Calu3 (cell line): ENCODE measurements at regions of chr19 and their contacts with region 1.

Region 1: DNA sequence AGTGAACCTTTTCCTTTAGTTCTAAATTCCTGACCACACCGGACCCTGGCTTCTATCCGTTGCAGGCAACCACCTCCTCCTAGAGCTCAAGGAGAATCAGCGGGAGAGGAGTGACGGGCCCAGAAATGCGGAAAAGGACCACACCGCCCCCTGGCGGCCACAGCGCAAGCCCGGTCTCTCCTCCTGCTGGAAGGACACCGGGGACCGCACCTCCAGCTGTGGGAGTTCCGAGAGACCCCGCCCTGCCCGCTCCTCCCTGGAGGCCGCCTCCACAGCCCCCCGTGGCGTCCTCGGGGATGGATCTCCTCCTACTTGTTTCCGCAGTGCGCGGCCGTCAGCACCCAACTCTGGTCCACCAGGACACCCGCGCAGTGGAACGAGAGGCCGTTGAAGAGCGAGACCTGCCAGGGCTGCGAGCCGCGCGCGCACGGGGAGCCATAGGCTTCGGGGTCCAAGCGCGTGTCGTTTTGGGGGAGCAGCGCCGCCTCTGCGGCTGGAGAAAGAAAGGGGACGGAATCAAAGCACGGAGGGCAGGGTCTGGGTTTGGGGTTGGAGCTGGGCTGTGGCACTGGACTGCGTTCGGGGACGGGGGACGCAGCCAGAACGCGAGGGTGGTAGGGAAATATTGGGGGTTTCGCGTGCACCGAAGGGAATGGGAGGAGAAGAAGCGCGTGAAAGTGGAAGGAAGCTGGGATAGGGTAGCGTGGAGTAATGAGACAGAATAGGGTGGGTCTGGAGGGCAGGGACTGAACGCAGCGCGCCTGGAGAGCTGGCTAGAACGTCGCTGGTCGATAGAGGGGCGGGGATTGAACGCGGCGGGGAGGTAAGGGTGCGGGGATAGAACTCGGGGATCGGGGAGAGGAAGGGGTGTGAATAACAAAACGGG is 2.5 kb downstream of the KLK10 start:
- DNase-seq: peak; percentile 98
- H3K4me3 Mint-ChIP-seq: peak overlapping the region; percentile 89
- H3K27ac Mint-ChIP-seq: peak overlapping the region; percentile 86
- H3K4me1 Mint-ChIP-seq: peaks cover 30% of the 10 kb centered on the region
- H3K27me3 Mint-ChIP-seq: no peaks in the 10 kb centered on the region
- CTCF ChIP-seq: peak; percentile 98

Region 2: GRCh38 chr19:49210108-49210900 is 1806.7 kb before region 1 on chr19:
- CTCF ChIA-PET with region 1: no interaction called
- intact Hi-C with region 1: no loop called
- DNase-seq: peak; percentile 34
- H3K4me3 Mint-ChIP-seq: no peak overlapping the region
- H3K27ac Mint-ChIP-seq: no peak overlapping the region
- H3K4me1 Mint-ChIP-seq: peaks cover 12% of the 10 kb centered on the region
- H3K27me3 Mint-ChIP-seq: no peaks in the 10 kb centered on the region
- CTCF ChIP-seq: no peak

Region 3: GRCh38 chr19:50804420-50805272 is 212.4 kb before region 1 on chr19:
- CTCF ChIA-PET with region 1: no interaction called
- intact Hi-C with region 1: loop called (anchors 10 kb)
- DNase-seq: peak; percentile 99
- H3K4me3 Mint-ChIP-seq: peak overlapping the region; percentile 85
- H3K27ac Mint-ChIP-seq: peak overlapping the region; percentile 98
- H3K4me1 Mint-ChIP-seq: peaks cover 37% of the 10 kb centered on the region
- H3K27me3 Mint-ChIP-seq: peaks cover 24% of the 10 kb centered on the region
- CTCF ChIP-seq: no peak

Region 4: GRCh38 chr19:50851620-50852019 is 165.4 kb before region 1 on chr19:
- CTCF ChIA-PET with region 1: no interaction called
- intact Hi-C with region 1: no loop called
- DNase-seq: no peak
- H3K4me3 Mint-ChIP-seq: no peak overlapping the region
- H3K27ac Mint-ChIP-seq: no peak overlapping the region
- H3K4me1 Mint-ChIP-seq: no peaks in the 10 kb centered on the region
- H3K27me3 Mint-ChIP-seq: peaks cover 52% of the 10 kb centered on the region
- CTCF ChIP-seq: no peak

Region 5: DNA sequence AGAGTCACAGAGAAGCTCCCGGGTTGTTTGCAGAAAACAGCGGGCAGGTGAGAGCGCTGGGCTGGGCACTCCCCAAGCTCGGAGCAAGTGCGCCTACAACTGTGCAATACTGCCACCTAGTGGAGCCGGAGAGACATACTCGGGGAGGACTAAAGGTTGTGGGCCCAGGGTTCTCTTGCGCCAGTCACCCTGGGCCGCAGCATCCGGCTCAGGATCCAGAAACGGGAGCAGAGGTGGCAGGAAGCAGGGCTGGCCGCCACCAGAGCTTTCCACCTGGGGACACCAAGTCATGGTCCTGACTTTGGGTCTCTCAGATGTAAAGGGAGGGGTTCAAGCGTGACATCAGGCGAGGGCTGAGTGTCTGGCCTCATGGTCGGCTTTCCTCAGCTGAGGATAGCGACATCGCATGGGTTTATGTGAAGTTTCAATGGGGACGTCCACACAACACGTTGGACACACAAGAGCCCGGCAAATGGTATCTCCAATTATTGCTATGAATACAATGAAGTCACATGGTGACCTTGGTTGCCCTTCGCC is 94.7 kb before region 1 on chr19:
- CTCF ChIA-PET with region 1: interaction called, 43 read pairs
- intact Hi-C with region 1: no loop called
- DNase-seq: peak; percentile 91
- H3K4me3 Mint-ChIP-seq: no peak overlapping the region
- H3K27ac Mint-ChIP-seq: peak overlapping the region; percentile 10
- H3K4me1 Mint-ChIP-seq: peaks cover 21% of the 10 kb centered on the region
- H3K27me3 Mint-ChIP-seq: peaks cover 28% of the 10 kb centered on the region
- CTCF ChIP-seq: peak; percentile 94

Region 6: GRCh38 chr19:50933640-50934039 is 83.4 kb before region 1 on chr19:
- CTCF ChIA-PET with region 1: interaction called, 22 read pairs
- intact Hi-C with region 1: loop called (anchors 1 kb)
- DNase-seq: no peak
- H3K4me3 Mint-ChIP-seq: no peak overlapping the region
- H3K27ac Mint-ChIP-seq: peak overlapping the region; percentile 59
- H3K4me1 Mint-ChIP-seq: peaks cover 43% of the 10 kb centered on the region
- H3K27me3 Mint-ChIP-seq: no peaks in the 10 kb centered on the region
- CTCF ChIP-seq: no peak

Region 7: DNA sequence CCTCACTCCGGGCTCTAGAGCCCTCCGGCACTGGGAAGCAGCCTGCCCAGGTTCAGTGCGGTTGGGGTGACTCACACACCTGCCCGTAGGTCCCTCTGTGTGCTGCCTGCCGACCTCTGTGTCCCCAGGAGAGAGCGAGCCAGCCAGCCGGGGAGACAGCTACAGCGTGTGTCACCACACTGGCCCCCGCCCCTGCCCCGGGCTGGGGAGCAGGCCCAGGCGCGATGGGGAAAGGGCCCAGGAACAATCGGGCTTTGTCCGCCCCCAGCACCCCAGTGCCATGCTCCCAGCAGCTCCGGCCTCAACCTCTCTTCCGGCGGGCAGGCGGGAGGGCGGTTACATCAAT is 47.7 kb before region 1 on chr19 and contains the start of gene KLK6:
- CTCF ChIA-PET with region 1: interaction called, 38 read pairs
- intact Hi-C with region 1: loop called (anchors 1 kb)
- DNase-seq: peak; percentile 98
- H3K4me3 Mint-ChIP-seq: peak within 1 kb of the TSS; percentile 72
- H3K27ac Mint-ChIP-seq: peak within 1 kb of the TSS; percentile 81
- H3K4me1 Mint-ChIP-seq: peaks cover 67% of the 10 kb centered on the region
- H3K27me3 Mint-ChIP-seq: no peaks in the 10 kb centered on the region
- CTCF ChIP-seq: no peak
- total RNA-seq, gene KLK6: 269 and 350 TPM in 2 replicates

Region 8: DNA sequence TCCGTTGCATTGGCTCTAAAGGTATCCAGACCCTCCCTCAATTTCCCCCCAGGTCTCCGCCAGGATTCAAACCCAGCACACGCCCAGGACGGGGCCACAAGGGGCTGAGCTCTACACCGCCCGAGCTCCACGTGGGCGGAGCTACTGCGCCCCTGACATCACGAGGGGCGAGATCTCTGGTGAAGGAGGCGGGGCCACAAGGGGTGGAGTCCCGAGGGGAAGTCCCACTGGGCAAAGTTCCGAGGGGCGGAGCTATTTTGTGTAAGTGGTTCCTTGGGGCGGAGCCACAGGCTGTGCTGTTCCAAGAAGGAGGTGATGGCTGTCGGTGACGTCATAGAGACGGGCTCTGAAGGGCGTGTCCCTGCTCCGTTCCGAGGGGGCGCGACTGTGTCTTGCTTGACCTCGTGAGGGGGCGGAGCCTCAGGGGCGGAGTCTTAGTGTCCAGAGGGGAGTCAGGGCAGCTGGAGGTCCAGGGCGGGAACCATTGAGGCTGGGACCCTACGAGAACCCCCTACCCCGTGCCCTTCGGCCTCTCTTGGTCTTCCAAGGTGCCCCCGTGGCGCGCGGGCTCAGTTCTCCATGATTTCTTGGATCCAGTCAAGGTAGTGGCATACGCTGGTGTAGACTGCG is 14.4 kb before region 1 on chr19:
- CTCF ChIA-PET with region 1: interaction called, 24 read pairs
- intact Hi-C with region 1: no loop called
- DNase-seq: peak; percentile 96
- H3K4me3 Mint-ChIP-seq: peak overlapping the region; percentile 74
- H3K27ac Mint-ChIP-seq: peak overlapping the region; percentile 80
- H3K4me1 Mint-ChIP-seq: peaks cover 42% of the 10 kb centered on the region
- H3K27me3 Mint-ChIP-seq: peaks cover 54% of the 10 kb centered on the region
- CTCF ChIP-seq: no peak

Region 9: DNA sequence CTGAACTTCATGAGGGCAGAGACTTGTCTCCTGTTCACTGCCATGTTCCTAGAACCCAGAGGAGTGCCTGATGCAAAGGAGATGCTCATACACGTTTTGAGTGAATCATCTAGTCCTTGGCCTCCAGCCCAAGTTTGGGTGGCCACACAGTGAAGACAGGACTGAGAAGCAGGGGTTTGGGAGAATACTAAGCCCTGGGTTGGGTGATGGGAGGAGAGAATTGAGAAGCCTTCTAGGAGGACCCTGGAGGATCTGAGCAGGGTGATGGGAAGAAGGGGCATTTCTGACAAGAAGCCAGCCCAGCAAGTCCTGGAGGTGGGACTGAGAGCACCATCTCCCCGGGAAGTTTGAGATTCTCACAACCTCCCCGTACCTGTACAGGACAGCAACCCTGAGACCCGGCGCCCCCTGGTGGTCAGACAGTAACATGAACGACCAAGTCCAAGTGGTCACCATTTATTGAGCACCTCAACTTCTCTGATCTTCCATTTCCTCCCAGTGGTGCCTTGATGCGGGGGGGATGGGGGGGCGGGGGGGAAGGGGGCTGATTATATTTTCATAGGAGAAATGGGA is 80.2 kb after region 1 on chr19:
- CTCF ChIA-PET with region 1: interaction called, 37 read pairs
- intact Hi-C with region 1: loop called (anchors 1 kb)
- DNase-seq: peak; percentile 93
- H3K4me3 Mint-ChIP-seq: no peak overlapping the region
- H3K27ac Mint-ChIP-seq: no peak overlapping the region
- H3K4me1 Mint-ChIP-seq: peaks cover 33% of the 10 kb centered on the region
- H3K27me3 Mint-ChIP-seq: no peaks in the 10 kb centered on the region
- CTCF ChIP-seq: peak; percentile 75

Region 10: GRCh38 chr19:51158474-51159129 is 141.6 kb after region 1 on chr19:
- CTCF ChIA-PET with region 1: no interaction called
- intact Hi-C with region 1: no loop called
- DNase-seq: peak; percentile 88
- H3K4me3 Mint-ChIP-seq: no peak overlapping the region
- H3K27ac Mint-ChIP-seq: no peak overlapping the region
- H3K4me1 Mint-ChIP-seq: no peaks in the 10 kb centered on the region
- H3K27me3 Mint-ChIP-seq: peaks cover 100% of the 10 kb centered on the region
- CTCF ChIP-seq: peak; percentile 83